Activated T-helper 2 cell treated with anti-CD3 and anti-CD28 coated beads, Interferon-gamma antibody, Interleukin-2, Interleukin-4, amounts not matched to agents 10 μg/mL and 5 μg/mL and 100 μg/mL, durations not matched to agents 14 hours and 24 hours and 36 hours (primary cell): ENCODE measurements at regions of chr7 and their contacts with region 1.

Region 1: GRCh38 chr7:111138196-111138569 is 47.3 kb downstream of the LRRN3 start:
- DNase-seq: peak; percentile 57
- H3K4me3 Mint-ChIP-seq: peak overlapping the region; percentile 57
- H3K27ac Mint-ChIP-seq: peak overlapping the region; percentile 93
- H3K4me1 Mint-ChIP-seq: peaks cover 32% of the 10 kb centered on the region
- H3K27me3 Mint-ChIP-seq: no peaks in the 10 kb centered on the region

Region 2: GRCh38 chr7:111006691-111007090 is 131.5 kb before region 1 on chr7:
- intact Hi-C with region 1: loop called (anchors 2 kb)
- DNase-seq: no peak
- H3K4me3 Mint-ChIP-seq: no peak overlapping the region
- H3K27ac Mint-ChIP-seq: no peak overlapping the region
- H3K4me1 Mint-ChIP-seq: peaks cover 36% of the 10 kb centered on the region
- H3K27me3 Mint-ChIP-seq: no peaks in the 10 kb centered on the region

Region 3: GRCh38 chr7:111067251-111067650 is 70.9 kb before region 1 on chr7:
- intact Hi-C with region 1: no loop called
- DNase-seq: no peak
- H3K4me3 Mint-ChIP-seq: no peak overlapping the region
- H3K27ac Mint-ChIP-seq: no peak overlapping the region
- H3K4me1 Mint-ChIP-seq: peaks cover 21% of the 10 kb centered on the region
- H3K27me3 Mint-ChIP-seq: no peaks in the 10 kb centered on the region

Region 4: GRCh38 chr7:111089822-111090426 is 48.3 kb before region 1 on chr7:
- intact Hi-C with region 1: loop called (anchors 1 kb)
- DNase-seq: no peak
- H3K4me3 Mint-ChIP-seq: peak overlapping the region; percentile 97
- H3K27ac Mint-ChIP-seq: no peak overlapping the region
- H3K4me1 Mint-ChIP-seq: peaks cover 73% of the 10 kb centered on the region
- H3K27me3 Mint-ChIP-seq: no peaks in the 10 kb centered on the region

Region 5: GRCh38 chr7:111173990-111174389 is 35.8 kb after region 1 on chr7:
- intact Hi-C with region 1: loop called (anchors 2 kb)
- DNase-seq: no peak
- H3K4me3 Mint-ChIP-seq: no peak overlapping the region
- H3K27ac Mint-ChIP-seq: no peak overlapping the region
- H3K4me1 Mint-ChIP-seq: peaks cover 17% of the 10 kb centered on the region
- H3K27me3 Mint-ChIP-seq: no peaks in the 10 kb centered on the region

Region 6: DNA sequence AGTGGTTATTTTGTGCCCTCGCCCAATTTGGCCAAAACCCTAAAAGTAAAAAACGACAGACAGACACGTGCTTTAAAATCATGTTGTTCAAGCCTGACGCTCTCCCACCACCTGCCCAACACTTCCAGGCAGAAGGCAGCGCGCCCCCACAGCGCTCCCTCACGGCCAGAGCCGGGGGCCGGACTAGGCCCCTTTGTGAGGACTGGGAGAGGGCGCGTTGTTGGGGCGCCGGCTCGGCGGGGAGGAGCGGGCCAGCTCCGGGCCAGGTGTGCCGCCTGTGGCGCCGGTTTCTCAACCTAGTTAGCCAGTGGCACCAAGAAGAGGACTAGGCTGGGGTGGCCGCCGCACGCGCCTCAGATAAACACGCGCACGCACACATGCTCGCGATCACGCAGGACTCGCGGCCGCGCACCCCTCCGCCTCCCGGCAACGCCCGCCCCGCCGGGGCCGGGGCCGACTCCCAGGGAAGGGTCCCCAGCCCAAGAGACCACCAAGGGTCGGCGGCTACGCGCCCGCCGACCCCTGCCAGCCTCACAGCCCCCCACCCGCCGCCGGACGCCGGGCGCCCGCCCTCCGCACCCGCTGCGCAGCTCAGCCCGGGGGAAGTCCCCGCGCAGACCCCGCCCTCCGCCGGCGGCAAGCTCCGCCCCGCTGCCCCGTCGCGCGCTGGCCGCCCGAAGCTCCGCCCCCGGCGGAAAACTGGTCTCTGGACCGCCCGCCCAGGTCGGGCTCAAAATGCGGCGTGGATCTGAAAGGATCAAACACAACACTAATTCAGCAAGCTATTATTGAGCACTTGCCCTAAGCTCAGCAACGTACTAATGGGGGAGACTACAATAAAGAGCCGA is 423.9 kb after region 1 on chr7 and contains the start of gene IMMP2L:
- intact Hi-C with region 1: loop called (anchors 5 kb)
- DNase-seq: peak; percentile 89
- H3K4me3 Mint-ChIP-seq: peak within 1 kb of the TSS; percentile 87
- H3K27ac Mint-ChIP-seq: peak within 1 kb of the TSS; percentile 85
- H3K4me1 Mint-ChIP-seq: peaks cover 31% of the 10 kb centered on the region
- H3K27me3 Mint-ChIP-seq: peaks cover 9% of the 10 kb centered on the region
- total RNA-seq, gene IMMP2L: 12.4 and 20.0 TPM in 2 replicates